Activated CD8-positive, alpha-beta T cell treated with anti-CD3 and anti-CD28 coated beads for 36 hours (primary cell): ENCODE measurements at regions of chr9 and their contacts with region 1.

Region 1: GRCh38 chr9:126490871-126491567 is 122.7 kb upstream of the LMX1B start:
- DNase-seq: peak; percentile 66
- ATAC-seq: peak; percentile 70
- H3K4me3 Mint-ChIP-seq: no peak overlapping the region
- H3K27ac Mint-ChIP-seq: no peak overlapping the region
- H3K4me1 Mint-ChIP-seq: peaks cover 11% of the 10 kb centered on the region
- H3K27me3 Mint-ChIP-seq: no peaks in the 10 kb centered on the region
- CTCF ChIP-seq: peak; percentile 97

Region 2: DNA sequence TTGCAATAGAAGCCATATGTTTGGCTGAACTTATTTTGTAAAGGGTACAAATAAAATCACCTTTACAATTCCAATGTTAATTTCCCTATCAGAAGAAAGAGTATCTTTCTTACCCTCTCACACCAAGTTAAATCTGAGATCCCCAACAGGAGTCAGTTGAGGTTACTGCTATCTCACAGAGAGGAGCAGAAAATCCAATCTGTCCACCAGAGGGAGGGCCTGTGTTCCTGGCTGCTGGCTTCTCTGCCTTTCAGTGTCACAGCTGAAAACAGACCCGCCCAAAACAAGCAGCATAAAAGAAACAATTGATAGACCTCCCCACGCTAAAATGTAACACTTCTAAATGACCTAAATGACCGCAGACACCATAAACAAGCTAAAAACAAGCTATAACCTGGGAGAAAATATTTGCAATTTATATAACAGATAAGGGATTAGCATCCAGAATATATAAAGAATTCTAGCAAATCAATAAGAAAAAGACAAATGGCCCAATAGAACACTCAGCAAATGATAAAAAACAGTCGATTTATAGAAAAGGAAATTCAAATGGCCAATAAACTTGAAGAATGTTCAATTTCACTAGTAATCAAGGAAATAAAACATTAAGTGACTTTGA is 188.9 kb before region 1 on chr9:
- CTCF ChIA-PET with region 1: interaction called, 31 read pairs
- POLR2A ChIA-PET with region 1: no interaction called
- intact Hi-C with region 1: loop called (anchors 5 kb)
- DNase-seq: peak; percentile 71
- ATAC-seq: peak; percentile 67
- H3K4me3 Mint-ChIP-seq: no peak overlapping the region
- H3K27ac Mint-ChIP-seq: no peak overlapping the region
- H3K4me1 Mint-ChIP-seq: peaks cover 1% of the 10 kb centered on the region
- H3K27me3 Mint-ChIP-seq: peaks cover 1% of the 10 kb centered on the region
- CTCF ChIP-seq: peak; percentile 52

Region 3: GRCh38 chr9:126326228-126327005 is 164.6 kb before region 1 on chr9 and contains the start of gene MVB12B:
- CTCF ChIA-PET with region 1: interaction called, 17 read pairs
- POLR2A ChIA-PET with region 1: interaction called, 3 read pairs
- intact Hi-C with region 1: no loop called
- DNase-seq: peak; percentile 36
- ATAC-seq: peak; percentile 68
- H3K4me3 Mint-ChIP-seq: peak within 1 kb of the TSS; percentile 72
- H3K27ac Mint-ChIP-seq: peak within 1 kb of the TSS; percentile 82
- H3K4me1 Mint-ChIP-seq: peaks cover 40% of the 10 kb centered on the region
- H3K27me3 Mint-ChIP-seq: no peaks in the 10 kb centered on the region
- CTCF ChIP-seq: no peak
- total RNA-seq, gene MVB12B: 6.4 to 6.6 TPM

Region 4: GRCh38 chr9:126366366-126367011 is 124.5 kb before region 1 on chr9:
- CTCF ChIA-PET with region 1: no interaction called
- POLR2A ChIA-PET with region 1: no interaction called
- intact Hi-C with region 1: no loop called
- DNase-seq: no peak
- ATAC-seq: no peak
- H3K4me3 Mint-ChIP-seq: no peak overlapping the region
- H3K27ac Mint-ChIP-seq: no peak overlapping the region
- H3K4me1 Mint-ChIP-seq: no peaks in the 10 kb centered on the region
- H3K27me3 Mint-ChIP-seq: no peaks in the 10 kb centered on the region
- CTCF ChIP-seq: no peak

Region 5: GRCh38 chr9:126398403-126399058 is 92.5 kb before region 1 on chr9:
- CTCF ChIA-PET with region 1: interaction called, 58 read pairs
- POLR2A ChIA-PET with region 1: interaction called, 3 read pairs
- intact Hi-C with region 1: loop called (anchors 5 kb)
- DNase-seq: peak; percentile 80
- ATAC-seq: no peak
- H3K4me3 Mint-ChIP-seq: no peak overlapping the region
- H3K27ac Mint-ChIP-seq: peak overlapping the region; percentile 63
- H3K4me1 Mint-ChIP-seq: peaks cover 57% of the 10 kb centered on the region
- H3K27me3 Mint-ChIP-seq: no peaks in the 10 kb centered on the region
- CTCF ChIP-seq: peak; percentile 97

Region 6: DNA sequence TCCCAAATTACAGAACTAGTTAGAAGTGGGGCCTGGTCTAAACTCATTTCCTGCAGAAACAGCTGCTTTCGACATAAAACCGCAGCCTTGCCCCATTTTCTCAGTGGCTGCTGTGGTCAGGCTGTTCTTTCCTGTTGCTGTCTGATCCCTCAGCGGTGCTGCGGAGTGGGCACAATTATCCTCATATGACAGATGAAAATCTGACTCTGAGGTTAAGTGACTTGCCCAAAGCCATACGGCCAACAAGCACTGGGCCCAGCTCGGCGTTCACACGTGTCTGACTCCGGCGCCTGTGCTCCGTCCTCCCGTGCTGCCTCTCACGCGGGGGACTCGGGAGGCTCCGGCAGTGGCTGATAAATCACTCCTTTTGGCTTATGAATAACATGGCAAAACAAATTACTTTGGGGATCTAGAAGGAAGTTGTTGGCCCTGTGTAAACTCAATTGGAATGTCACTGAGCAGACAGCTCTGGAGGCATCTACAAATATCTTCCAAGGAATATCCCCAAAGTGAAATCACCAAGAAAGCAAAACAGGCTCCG is 19.9 kb before region 1 on chr9:
- CTCF ChIA-PET with region 1: interaction called, 45 read pairs
- POLR2A ChIA-PET with region 1: interaction called, 3 read pairs
- intact Hi-C with region 1: no loop called
- DNase-seq: peak; percentile 94
- ATAC-seq: peak; percentile 80
- H3K4me3 Mint-ChIP-seq: peak overlapping the region; percentile 46
- H3K27ac Mint-ChIP-seq: peak overlapping the region; percentile 79
- H3K4me1 Mint-ChIP-seq: peaks cover 64% of the 10 kb centered on the region
- H3K27me3 Mint-ChIP-seq: peaks cover 3% of the 10 kb centered on the region
- CTCF ChIP-seq: no peak

Region 7: DNA sequence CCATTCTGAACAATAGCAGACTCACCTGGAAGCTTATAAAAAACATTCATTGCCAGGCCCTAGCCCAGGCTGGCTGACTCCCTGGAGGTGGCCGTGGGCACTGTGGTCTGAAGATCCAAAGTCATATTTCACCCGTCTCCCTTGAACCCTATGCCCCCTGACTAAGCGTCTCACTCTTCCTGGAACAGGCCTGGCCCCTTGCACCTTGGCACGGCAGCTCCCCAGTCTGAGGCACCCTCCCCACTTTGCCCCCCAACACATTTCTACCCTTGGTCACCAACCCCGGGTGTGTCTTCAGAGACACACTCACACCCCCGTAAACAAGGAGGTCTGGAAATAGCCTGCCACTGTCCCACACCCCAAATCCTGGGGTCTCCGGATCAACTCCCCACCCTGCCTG is 54.1 kb after region 1 on chr9:
- CTCF ChIA-PET with region 1: no interaction called
- POLR2A ChIA-PET with region 1: no interaction called
- intact Hi-C with region 1: no loop called
- DNase-seq: no peak
- ATAC-seq: no peak
- H3K4me3 Mint-ChIP-seq: no peak overlapping the region
- H3K27ac Mint-ChIP-seq: no peak overlapping the region
- H3K4me1 Mint-ChIP-seq: no peaks in the 10 kb centered on the region
- H3K27me3 Mint-ChIP-seq: no peaks in the 10 kb centered on the region
- CTCF ChIP-seq: no peak